IMR-90 (cell line): ENCODE measurements at regions of chr9 and their contacts with region 1.

Region 1: DNA sequence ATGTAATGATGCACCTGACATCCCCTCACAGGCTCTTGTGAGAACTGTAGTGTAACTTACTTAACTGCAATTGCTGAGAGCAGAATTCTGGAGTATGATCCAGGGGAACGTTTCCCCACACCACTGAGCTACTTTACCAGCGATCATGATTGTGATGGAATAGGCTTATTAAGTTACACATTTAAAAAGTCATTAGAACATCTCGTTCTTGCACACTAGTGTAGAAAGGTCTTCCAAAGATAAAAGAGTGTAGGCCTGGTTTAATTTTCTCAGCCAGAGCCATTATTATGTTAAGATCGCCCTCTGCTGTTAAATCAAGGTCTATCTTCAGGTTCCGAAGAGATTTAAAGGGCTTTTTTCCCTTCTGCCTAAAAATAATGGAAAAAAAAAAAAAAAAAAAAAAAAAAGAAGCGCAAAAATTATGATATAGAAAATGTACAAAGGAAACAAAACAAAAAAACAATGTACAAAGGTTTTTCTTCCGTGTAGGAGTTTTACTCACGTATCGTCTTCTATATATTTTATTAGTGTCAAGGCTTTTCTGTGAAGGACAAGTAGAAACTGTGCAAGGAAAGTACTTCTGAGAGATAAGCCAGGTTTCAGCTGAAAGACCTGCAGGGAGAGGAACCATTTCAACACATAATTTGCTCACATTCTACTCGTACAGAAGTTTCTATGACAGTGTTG is 18.6 kb upstream of the MOB3B start:
- DNase-seq: peak; percentile 51
- ATAC-seq: peak; percentile 93
- H3K4me3 ChIP-seq: no peak overlapping the region
- H3K27ac ChIP-seq: no peak overlapping the region
- H3K4me1 ChIP-seq: peaks cover 2% of the 10 kb centered on the region; the same call in 1 of the 2 replicates
- H3K27me3 ChIP-seq: no peaks in the 10 kb centered on the region
- CTCF ChIP-seq: peak; percentile 74
- POLR2A ChIP-seq: no peak
- RAD21 ChIP-seq: peak; percentile 75

Region 2: DNA sequence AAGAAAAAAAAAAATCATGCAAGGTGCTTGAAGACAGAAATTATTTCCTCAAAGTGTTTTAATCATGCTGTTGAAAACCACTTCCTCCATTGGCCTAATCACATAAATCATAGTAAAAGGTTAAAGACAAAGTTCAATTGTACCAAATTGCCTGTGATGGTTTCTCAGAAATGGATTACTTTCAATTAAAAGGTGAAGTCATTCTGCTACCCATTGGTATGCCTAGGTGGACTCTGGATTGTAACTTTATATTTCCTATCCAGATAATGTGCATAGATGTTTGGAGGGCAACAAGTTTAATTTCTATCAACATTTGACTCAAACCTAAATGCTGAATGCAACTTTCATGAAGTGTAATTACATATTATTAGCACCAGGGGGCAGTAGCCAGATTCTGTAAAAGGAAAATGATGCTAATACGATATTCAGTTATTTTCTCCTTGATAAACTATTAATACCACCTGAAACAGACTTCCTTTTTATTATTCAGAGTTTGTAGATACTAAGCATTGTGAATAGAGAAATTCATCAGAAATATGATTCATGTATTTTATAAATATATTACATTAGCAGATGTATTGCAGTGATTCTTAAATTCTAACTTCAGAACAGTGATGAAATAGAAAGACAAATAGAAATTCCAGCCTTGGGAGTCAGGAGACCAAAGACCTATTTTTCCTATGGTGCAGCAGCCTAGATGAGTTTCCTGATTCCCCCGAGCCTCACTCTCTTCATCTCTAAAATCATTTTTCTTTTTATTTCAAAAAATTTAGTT is 803.8 kb before region 1 on chr9:
- CTCF ChIA-PET with region 1: no interaction called
- POLR2A ChIA-PET with region 1: no interaction called
- dilution Hi-C with region 1: no loop called
- in situ Hi-C with region 1: no loop called
- intact Hi-C with region 1: loop called (anchors 5 kb)
- DNase-seq: peak; percentile 38
- ATAC-seq: no peak
- H3K4me3 ChIP-seq: no peak overlapping the region
- H3K27ac ChIP-seq: no peak overlapping the region
- H3K4me1 ChIP-seq: no peaks in the 10 kb centered on the region
- H3K27me3 ChIP-seq: no peaks in the 10 kb centered on the region; the same call in 1 of the 2 replicates
- CTCF ChIP-seq: peak; percentile 70
- POLR2A ChIP-seq: no peak
- RAD21 ChIP-seq: peak; percentile 54

Region 3: DNA sequence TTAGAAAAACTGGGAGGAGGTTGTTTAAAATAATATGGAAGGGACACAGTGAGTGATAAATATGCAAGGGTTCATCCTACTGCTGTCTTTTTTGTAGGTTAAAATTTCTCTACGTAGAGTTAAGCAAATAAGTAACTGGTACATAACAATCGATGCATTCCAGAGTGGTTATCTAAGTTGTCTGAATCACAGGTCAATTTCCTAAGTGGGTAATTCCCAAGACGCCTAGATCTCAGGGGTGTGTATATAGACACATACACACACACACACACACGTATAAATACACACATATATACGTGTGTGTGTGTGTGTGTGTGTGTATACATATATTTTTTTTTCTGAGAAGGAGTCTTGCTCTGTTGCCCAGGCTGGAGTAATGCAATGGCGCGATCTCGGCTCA is 677.9 kb before region 1 on chr9:
- CTCF ChIA-PET with region 1: no interaction called
- POLR2A ChIA-PET with region 1: no interaction called
- dilution Hi-C with region 1: no loop called
- in situ Hi-C with region 1: no loop called
- intact Hi-C with region 1: loop called (anchors 10 kb)
- DNase-seq: peak; percentile 62
- ATAC-seq: peak; percentile 44
- H3K4me3 ChIP-seq: no peak overlapping the region
- H3K27ac ChIP-seq: no peak overlapping the region
- H3K4me1 ChIP-seq: no peaks in the 10 kb centered on the region
- H3K27me3 ChIP-seq: no peaks in the 10 kb centered on the region
- CTCF ChIP-seq: no peak
- POLR2A ChIP-seq: no peak
- RAD21 ChIP-seq: no peak

Region 4: DNA sequence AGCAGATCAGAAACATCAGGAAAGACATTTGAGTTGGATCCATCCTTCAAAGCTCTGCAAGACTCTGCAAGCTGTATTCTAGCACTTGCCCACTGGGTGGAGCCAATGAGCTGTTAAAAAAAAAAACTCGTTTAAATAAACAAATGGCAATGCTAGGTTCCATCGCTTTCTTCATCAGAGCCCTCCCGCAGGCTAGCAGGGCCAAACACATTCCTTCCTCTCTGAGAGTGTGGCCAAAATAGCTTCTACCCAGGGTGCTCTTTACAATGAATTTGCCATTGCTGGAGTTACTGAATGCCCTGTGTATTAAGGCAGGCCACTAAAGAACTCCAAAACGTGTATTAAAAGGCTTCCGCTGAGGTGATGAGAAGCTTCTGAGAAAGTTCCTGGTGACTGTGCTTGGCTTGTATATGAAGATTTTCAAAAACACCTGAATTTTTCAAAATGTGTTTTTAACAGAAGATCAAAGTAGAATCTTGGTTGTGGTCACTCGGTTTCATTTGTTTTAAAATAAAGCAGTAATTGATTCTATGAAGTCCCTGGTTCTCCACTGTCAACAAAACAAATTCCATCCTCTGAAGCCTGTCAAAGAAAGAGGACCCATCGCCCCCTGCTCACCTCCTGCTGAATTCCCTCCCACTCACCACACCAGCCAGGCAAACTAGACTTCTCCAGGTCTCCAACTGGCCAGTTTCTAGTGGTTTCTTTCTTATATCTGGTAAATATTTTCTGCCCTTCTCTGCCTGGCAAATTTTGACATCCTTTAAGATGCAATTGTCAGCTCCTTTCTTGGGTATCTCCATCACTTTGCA is 214.8 kb before region 1 on chr9:
- CTCF ChIA-PET with region 1: interaction called, 11 read pairs
- POLR2A ChIA-PET with region 1: no interaction called
- dilution Hi-C with region 1: no loop called
- in situ Hi-C with region 1: no loop called
- intact Hi-C with region 1: loop called (anchors 1 kb)
- DNase-seq: peak; percentile 73
- ATAC-seq: peak; percentile 95
- H3K4me3 ChIP-seq: no peak overlapping the region
- H3K27ac ChIP-seq: no peak overlapping the region
- H3K4me1 ChIP-seq: no peaks in the 10 kb centered on the region; the same call in 1 of the 2 replicates
- H3K27me3 ChIP-seq: peaks cover 29% of the 10 kb centered on the region
- CTCF ChIP-seq: peak; percentile 89
- POLR2A ChIP-seq: no peak
- RAD21 ChIP-seq: peak; percentile 78

Region 5: DNA sequence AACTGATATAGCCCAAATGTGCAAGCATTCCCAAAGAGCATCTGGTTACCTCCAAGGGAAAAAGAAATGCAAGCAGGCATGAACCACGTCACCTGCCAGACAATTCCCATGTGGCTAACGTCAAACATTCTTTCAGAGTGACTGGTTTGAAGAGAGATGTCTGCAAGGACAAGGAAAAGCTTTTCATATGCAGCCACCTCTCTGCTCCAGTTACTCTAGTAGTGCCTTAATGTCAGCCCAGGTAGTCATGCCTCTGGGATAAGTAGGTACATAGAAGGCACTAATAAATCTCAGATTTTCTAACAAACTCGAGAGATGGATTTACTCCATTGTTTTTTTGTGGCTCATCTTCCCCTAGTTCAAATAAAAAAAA is 120.9 kb before region 1 on chr9:
- CTCF ChIA-PET with region 1: no interaction called
- POLR2A ChIA-PET with region 1: no interaction called
- dilution Hi-C with region 1: no loop called
- in situ Hi-C with region 1: no loop called
- intact Hi-C with region 1: no loop called
- DNase-seq: peak; percentile 18
- ATAC-seq: no peak
- H3K4me3 ChIP-seq: no peak overlapping the region
- H3K27ac ChIP-seq: no peak overlapping the region
- H3K4me1 ChIP-seq: no peaks in the 10 kb centered on the region
- H3K27me3 ChIP-seq: no peaks in the 10 kb centered on the region
- CTCF ChIP-seq: no peak
- POLR2A ChIP-seq: no peak
- RAD21 ChIP-seq: no peak

Region 6: DNA sequence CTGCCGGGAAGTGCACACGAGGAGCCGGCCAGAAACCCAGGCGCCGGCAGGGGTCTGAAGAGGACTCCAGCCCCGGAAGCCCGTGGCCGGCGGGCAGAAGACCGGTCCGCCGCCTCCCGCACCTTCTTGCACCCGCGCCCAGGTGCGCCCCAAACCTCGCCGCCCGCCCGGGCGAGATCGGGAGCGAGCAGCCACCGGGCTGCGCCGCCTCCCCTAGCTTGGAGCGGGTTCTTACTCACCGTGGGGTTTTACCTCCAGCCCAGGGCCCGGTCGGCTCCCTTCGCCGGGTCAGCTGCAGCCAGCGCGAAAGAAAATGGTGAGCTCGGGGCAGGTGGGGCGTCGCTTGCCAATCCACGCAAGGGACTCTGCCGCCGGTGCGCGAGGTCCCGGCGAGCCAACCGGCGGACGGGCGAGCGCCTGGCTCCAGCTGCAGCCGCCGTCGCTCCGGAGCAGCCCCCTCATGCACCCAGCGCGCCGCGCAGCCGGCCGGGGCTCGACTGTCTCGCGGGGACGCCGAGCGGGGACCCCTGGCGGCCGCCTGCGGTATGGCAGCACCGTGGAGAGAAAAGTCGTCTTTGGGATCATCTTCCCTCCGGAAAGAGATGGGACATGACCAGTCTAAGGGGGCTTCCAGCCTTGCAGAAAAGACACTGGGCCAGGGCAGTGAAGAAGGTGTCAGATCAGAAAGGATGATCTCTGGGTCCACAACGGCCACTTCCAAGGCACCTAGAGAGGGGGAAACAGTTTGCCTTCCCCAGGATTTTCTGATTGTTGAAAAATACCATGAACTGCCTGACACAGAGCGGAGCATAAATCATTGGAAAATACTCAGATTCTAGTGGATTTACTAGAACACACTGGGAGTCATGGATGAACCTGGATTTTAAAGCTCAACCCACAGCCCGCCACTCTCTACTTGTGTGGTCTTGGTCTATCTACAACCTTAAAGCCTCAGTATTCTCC is 18.6 kb before region 1 on chr9 and contains the start of gene MOB3B:
- CTCF ChIA-PET with region 1: interaction called, 13 read pairs
- POLR2A ChIA-PET with region 1: no interaction called
- dilution Hi-C with region 1: no loop called
- in situ Hi-C with region 1: no loop called
- intact Hi-C with region 1: no loop called
- DNase-seq: peak; percentile 50
- ATAC-seq: peak; percentile 98
- H3K4me3 ChIP-seq: peak within 1 kb of the TSS; percentile 57
- H3K27ac ChIP-seq: no peak within 1 kb of the TSS
- H3K4me1 ChIP-seq: no peaks in the 10 kb centered on the region
- H3K27me3 ChIP-seq: peaks cover 32% of the 10 kb centered on the region
- CTCF ChIP-seq: peak; percentile 82
- POLR2A ChIP-seq: no peak
- RAD21 ChIP-seq: peak; percentile 54
- total RNA-seq, gene MOB3B: under 0.01 TPM in 2 replicates